Activated naive CD4-positive, alpha-beta T cell treated with anti-CD3 and anti-CD28 coated beads for 36 hours (primary cell): ENCODE measurements at regions of chr11 and their contacts with region 1.

Region 1: GRCh38 chr11:9460322-9461067 is at the start of gene ZNF143:
- DNase-seq: peak; percentile 100
- H3K4me3 Mint-ChIP-seq: peak within 1 kb of the TSS; percentile 96
- H3K27ac Mint-ChIP-seq: peak within 1 kb of the TSS; percentile 99
- H3K4me1 Mint-ChIP-seq: peaks cover 27% of the 10 kb centered on the region
- H3K27me3 Mint-ChIP-seq: no peaks in the 10 kb centered on the region
- total RNA-seq, gene ZNF143: 39.1 to 42.5 TPM

Region 2: GRCh38 chr11:8682303-8683114 is 778.0 kb before region 1 on chr11 and contains the starts of genes RPL27A and TRIM66:
- CTCF ChIA-PET with region 1: no interaction called
- intact Hi-C with region 1: loop called (anchors 2 kb)
- DNase-seq: peak; percentile 99
- H3K4me3 Mint-ChIP-seq: peak within 1 kb of the TSS; percentile 91
- H3K27ac Mint-ChIP-seq: peak within 1 kb of the TSS; percentile 92
- H3K4me1 Mint-ChIP-seq: peaks cover 42% of the 10 kb centered on the region
- H3K27me3 Mint-ChIP-seq: no peaks in the 10 kb centered on the region
- total RNA-seq, gene RPL27A: 1,157 to 1,188 TPM
- total RNA-seq, gene TRIM66: 16.4 to 19.1 TPM

Region 3: DNA sequence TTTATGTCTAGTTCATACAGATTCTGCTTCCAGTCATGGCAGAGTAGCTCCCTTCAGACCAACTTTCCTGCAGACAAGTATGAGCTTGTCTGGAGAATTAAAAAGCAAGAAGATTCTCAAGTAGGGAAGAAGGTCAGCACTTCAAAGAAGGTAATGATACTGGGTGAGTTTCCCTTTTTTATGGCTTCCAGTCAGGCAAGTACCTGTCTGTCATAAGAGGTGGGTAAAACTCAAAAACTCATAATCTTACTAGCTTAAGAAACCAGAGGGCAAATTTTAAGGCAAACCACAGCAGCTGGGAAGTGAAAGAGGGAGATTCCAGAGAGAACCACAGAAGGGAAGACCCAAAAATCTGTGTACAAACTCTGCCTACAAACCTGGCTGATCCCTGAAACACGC is 249.6 kb before region 1 on chr11:
- CTCF ChIA-PET with region 1: no interaction called
- intact Hi-C with region 1: loop called (anchors 2 kb)
- DNase-seq: peak; percentile 73
- H3K4me3 Mint-ChIP-seq: no peak overlapping the region
- H3K27ac Mint-ChIP-seq: peak overlapping the region; percentile 82
- H3K4me1 Mint-ChIP-seq: peaks cover 68% of the 10 kb centered on the region
- H3K27me3 Mint-ChIP-seq: no peaks in the 10 kb centered on the region

Region 4: DNA sequence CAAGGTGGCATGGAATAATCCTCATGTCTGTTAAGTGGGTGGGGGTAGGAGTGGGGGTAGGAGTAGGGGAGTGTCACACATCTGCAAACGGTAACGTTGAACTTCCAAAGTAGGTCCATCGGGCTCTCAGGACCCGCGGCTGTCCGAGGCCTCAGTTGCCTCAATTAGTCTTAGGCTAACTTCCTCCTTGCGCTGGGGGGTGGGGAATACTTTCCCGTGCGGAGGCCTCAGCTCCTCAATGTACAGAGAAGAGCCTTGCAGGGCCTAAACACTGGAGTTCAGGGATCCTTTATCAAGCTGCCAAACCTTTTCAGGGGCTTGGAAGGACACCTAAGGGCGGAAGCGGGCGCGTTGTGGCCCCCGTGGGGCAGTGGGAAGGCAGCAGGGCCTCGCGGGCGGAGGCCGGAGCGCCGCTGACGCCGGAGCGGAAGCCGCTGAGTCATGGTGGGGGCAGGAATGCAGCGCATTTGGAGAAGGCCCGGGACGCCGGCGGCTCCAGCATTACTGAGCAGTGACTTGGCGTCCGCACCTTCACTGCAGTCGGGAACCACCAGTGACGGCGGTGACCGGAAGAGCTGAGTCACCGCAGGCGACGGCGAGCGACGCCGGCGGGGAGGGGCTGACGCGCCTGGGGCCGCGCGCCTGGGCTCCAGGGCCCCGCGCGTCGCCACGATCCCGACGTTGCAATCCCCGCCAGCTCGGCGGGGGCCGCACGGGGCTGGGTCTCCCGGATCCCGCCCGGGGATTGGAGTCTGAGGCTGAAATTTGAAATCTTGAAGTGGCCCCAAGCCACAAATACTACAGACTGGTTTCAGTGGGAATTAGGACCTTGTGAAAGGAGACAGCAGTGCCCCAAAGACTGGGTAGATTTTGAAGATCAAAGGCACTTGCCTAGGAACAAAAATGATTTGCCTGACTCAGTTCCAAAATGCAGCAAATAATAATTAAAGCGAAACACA is 96.3 kb before region 1 on chr11:
- CTCF ChIA-PET with region 1: no interaction called
- intact Hi-C with region 1: loop called (anchors 1 kb)
- DNase-seq: peak; percentile 91
- H3K4me3 Mint-ChIP-seq: peak overlapping the region; percentile 66
- H3K27ac Mint-ChIP-seq: peak overlapping the region; percentile 73
- H3K4me1 Mint-ChIP-seq: peaks cover 35% of the 10 kb centered on the region
- H3K27me3 Mint-ChIP-seq: no peaks in the 10 kb centered on the region

Region 5: DNA sequence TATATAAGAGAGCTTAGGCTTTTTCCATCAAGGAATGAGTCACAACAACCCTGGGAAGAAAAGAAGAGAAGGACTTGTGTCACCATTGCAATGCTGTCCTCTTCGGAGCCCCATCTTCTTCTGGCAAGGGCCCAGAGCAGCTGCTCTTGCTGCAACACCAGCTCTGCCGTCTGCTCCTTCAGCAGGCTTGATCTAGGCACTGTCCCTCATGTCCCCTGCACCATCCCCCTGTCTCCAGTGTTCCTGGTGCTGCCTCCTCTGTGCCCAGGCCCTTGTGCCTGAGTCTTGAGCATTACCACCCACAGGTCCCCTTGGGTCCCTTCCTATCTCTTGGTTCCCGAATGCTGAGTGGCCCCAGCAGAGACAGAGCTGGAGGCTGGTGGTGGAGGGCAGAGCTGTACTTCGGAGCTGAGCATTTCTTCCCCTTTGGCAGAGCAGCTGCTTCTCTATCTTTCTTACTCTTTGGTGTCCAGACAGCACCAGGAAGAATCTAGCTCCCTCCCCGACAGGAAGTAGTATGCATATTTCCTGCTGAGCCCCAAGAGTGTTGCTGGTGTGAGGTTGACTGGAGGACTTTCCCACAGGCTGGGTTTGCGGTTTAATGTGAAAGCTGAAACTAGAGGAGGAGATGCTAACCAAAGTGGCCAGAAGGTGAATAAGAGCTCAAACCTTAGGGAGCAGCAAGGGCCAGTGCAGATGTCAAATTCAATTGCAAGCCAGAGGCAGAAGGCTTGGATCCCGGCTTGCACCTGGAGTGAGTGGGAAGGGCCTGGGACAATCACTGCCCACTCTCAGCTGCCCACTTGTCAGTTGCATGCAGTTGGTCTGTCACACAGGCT is 140.8 kb after region 1 on chr11:
- CTCF ChIA-PET with region 1: no interaction called
- intact Hi-C with region 1: loop called (anchors 2 kb)
- DNase-seq: peak; percentile 90
- H3K4me3 Mint-ChIP-seq: peak overlapping the region; percentile 67
- H3K27ac Mint-ChIP-seq: peak overlapping the region; percentile 84
- H3K4me1 Mint-ChIP-seq: peaks cover 27% of the 10 kb centered on the region
- H3K27me3 Mint-ChIP-seq: peaks cover 2% of the 10 kb centered on the region

Region 6: DNA sequence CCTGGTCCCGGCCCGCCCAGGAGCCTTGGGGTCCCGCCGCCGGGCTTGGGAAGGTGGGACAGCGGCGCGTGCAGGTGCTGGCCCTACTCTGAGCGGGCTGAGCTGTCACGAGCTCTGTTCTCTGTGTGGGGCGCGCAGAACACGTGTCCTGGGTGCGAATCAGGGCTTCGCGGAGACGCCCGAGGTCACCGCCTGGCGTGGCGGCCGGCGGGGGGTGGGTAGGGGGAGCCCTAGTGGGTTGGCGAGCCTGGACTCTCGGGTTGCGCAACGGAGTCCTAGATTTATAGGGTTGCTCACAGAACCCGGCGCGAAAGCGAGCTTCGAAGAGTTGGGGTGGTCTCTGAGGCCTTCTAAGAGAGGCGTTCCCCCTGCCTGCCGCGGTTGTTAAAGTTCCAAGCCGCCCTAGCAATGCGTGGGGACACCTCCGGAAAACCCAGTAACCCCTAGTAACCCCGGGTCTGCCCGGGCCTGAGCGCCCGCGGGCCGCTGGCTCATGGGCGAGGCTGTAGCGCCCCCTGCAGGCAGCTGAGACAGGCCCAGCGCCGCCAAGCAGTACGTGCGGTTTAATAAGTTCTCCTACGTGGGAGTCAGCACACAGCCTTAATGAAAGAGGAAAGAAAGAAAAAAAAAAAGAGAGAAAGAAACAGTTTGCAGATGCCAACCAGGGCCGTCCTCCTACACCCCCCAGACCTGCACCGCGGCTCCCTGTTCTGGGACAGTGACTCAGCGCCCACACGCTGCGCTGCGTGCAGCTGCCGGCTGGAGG is 847.1 kb after region 1 on chr11:
- CTCF ChIA-PET with region 1: no interaction called
- intact Hi-C with region 1: loop called (anchors 5 kb)
- DNase-seq: peak; percentile 87
- H3K4me3 Mint-ChIP-seq: peak overlapping the region; percentile 81
- H3K27ac Mint-ChIP-seq: peak overlapping the region; percentile 59
- H3K4me1 Mint-ChIP-seq: peaks cover 33% of the 10 kb centered on the region
- H3K27me3 Mint-ChIP-seq: peaks cover 41% of the 10 kb centered on the region